Activated CD4-positive, alpha-beta T cell treated with anti-CD3 and anti-CD28 coated beads for 36 hours (primary cell): ENCODE measurements at regions of chr10 and their contacts with region 1.

Region 1: DNA sequence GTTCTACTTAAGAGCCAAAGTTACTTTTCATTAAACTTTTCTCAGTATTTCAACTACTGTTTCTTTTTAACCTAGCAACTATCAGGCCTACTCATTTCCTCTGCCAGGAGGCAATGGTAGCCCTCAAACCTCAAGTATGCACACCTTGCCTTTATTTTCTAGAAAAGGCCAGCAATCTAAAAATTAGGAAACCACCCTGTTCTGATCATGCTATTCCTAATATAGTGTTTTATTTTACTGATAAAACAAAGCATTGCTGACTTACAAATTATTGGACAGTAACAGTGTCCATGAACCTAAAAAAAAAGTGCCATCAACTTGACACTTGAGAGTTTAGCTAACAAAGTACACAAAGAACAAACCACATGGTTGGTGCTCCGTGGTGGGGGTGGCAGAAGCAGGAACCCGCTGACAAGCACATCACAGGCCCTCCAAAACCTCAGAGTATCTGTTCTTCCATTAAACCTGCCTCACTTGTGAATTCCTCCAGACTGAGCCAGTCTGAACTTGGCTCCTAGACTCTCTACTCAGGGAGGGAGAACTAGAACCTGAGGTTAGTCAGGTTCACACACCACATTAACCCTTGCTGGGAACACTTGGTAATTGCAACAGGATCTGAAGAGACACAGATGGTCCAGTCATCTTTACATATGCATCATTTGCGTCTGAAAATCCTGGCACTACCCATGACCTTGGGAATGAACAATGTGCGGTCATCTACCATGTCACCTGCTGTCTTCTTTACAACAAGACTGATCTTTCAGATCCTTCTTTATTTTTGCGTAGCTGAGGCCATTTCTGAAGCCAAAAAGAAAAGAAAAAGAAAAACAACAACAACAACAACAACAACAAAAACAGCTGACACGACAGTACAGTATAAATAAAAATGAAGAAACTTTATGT is 31.9 kb downstream of the PIP4K2A start:
- DNase-seq: peak; percentile 78
- ATAC-seq: peak; percentile 50
- H3K4me3 Mint-ChIP-seq: peak overlapping the region; percentile 70
- H3K27ac Mint-ChIP-seq: peak overlapping the region; percentile 97
- H3K4me1 Mint-ChIP-seq: peaks cover 88% of the 10 kb centered on the region
- H3K27me3 Mint-ChIP-seq: no peaks in the 10 kb centered on the region

Region 2: GRCh38 chr10:22325272-22326144 is 357.0 kb before region 1 on chr10:
- CTCF ChIA-PET with region 1: no interaction called
- POLR2A ChIA-PET with region 1: no interaction called
- intact Hi-C with region 1: loop called in 1 of 2 experiments (anchors 10 kb)
- DNase-seq: peak; percentile 83
- ATAC-seq: peak; percentile 45
- H3K4me3 Mint-ChIP-seq: peak overlapping the region; percentile 88
- H3K27ac Mint-ChIP-seq: peak overlapping the region; percentile 64
- H3K4me1 Mint-ChIP-seq: peaks cover 35% of the 10 kb centered on the region
- H3K27me3 Mint-ChIP-seq: peaks cover 23% of the 10 kb centered on the region

Region 3: DNA sequence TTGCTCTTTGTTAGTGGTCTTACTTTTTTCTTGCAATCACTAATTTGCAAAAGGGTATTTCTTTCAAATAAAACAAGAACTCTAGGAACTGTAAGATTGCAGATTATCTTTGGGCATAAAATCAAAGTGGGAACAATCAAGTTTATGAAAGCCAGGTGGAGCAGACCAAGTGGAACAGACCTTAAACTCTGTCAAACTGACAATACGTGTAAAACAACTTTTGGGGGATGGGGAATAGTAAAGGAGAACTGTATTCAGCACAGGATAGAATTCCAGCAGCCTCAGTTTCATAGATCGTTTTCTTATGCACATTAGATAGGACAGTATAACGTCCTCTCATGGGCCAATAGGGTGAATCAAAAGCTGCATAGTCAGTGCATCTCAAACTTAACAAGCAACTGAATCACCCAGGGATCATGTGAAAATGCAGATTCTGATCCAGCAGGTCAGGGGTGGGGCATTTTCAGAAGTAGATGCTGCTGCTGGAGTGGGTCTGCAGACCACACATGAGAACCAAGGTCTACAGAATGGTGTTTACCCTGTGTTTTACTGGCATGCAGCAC is 88.8 kb before region 1 on chr10:
- CTCF ChIA-PET with region 1: no interaction called
- POLR2A ChIA-PET with region 1: no interaction called
- intact Hi-C with region 1: no loop called
- DNase-seq: no peak
- ATAC-seq: no peak
- H3K4me3 Mint-ChIP-seq: no peak overlapping the region
- H3K27ac Mint-ChIP-seq: no peak overlapping the region
- H3K4me1 Mint-ChIP-seq: peaks cover 39% of the 10 kb centered on the region
- H3K27me3 Mint-ChIP-seq: no peaks in the 10 kb centered on the region

Region 4: DNA sequence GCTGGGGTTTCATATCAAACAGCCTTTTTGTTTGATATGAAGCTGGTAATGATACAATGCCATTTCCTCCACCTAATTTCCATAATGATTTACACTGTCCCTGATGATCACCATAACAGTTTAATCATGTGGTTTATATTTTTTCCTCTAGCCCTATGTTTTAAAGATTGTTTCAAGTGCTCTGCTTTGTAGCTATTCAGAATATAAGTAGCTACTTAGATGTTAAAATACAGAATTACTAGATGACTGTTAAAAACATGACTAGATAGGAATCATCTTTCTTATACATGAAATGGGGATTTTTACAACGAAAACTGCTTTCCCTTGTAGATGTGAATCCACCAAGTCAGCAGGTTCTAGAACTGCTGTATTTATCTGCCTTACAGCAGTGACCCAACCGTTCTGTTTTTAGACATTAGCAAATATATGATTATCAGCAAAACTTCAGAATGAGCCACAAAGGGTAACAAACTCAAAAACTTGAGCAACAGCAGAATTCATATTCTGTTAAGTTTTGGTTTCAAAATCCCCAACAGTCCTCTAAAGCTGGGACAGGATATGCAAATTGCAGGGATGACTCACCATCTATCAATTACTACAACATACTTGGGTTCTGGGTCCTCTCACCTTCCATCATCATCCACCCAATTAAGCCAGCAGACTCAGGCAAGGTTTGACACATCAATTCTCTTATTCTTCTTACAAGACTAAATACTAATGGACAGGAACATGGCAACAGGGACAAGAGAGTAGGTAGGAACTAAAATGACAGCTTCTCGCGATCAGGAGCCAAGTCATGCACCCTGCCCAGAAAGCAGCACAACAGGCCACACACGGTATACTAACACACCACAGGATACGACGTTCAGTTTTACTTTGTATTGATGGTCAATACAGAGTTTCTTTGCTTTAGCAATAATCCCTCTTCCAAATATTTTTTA is 52.0 kb before region 1 on chr10:
- CTCF ChIA-PET with region 1: interaction called, 12 read pairs
- POLR2A ChIA-PET with region 1: interaction called, 16 read pairs
- intact Hi-C with region 1: loop called (anchors 1 kb)
- DNase-seq: peak; percentile 57
- ATAC-seq: peak; percentile 79
- H3K4me3 Mint-ChIP-seq: peak overlapping the region; percentile 61
- H3K27ac Mint-ChIP-seq: peak overlapping the region; percentile 96
- H3K4me1 Mint-ChIP-seq: peaks cover 95% of the 10 kb centered on the region
- H3K27me3 Mint-ChIP-seq: no peaks in the 10 kb centered on the region

Region 5: DNA sequence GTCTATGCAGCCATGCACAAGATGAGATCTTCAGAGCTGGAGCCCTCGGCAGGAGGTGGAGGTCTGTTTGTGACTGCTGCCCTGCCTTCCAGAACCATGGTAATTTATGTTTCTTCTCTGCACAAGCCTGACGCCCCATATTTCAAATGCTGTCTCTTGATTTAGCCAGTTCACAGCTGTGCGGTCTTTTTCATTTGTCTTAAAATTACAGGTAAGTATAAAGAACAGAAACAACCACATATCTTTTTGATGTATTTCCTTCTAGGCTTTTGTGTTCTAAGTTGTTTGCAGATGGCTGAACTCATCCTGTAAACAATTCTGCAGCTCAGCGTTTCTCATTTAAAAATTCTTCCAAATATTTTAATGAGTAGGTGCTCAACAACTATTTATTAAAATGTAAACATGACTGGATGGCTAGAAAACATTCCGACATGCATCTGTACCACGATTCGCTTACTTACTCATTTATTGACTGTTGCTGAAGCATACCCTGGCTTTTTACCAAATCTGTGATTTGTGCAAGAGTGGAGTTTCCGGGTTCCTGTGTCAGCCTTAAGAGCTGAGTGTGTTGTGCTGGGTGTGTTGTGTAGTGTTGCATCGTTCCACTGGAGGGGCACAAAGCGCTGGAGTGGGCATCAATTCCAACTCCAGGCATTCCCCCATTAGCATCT is 27.0 kb before region 1 on chr10:
- CTCF ChIA-PET with region 1: interaction called, 14 read pairs
- POLR2A ChIA-PET with region 1: interaction called, 5 read pairs
- intact Hi-C with region 1: loop called (anchors 1 kb)
- DNase-seq: peak; percentile 62
- ATAC-seq: peak; percentile 57
- H3K4me3 Mint-ChIP-seq: peak overlapping the region; percentile 63
- H3K27ac Mint-ChIP-seq: peak overlapping the region; percentile 85
- H3K4me1 Mint-ChIP-seq: peaks cover 98% of the 10 kb centered on the region
- H3K27me3 Mint-ChIP-seq: no peaks in the 10 kb centered on the region

Region 6: DNA sequence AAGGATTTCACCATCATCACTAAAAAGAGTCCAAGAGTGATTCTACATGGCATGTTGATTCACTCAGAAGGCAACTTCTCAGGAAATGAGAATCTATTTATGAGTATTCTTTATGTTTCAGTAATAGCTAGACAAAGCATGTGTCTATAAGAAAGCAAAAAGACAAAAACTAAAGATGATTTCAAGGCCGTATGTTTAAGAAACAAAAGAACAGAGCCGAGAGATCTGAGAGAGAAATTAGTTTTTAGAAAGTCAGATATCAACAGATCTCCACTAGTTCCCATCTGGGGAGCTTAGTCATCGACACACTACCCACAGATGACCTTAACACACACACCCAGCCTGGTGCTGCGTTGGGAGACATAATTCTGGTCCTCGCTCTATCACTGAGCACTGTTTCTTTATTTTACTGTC is 10.9 kb after region 1 on chr10:
- CTCF ChIA-PET with region 1: interaction called, 6 read pairs
- POLR2A ChIA-PET with region 1: interaction called, 5 read pairs
- intact Hi-C with region 1: loop called (anchors 1 kb)
- DNase-seq: peak; percentile 51
- ATAC-seq: peak; percentile 87
- H3K4me3 Mint-ChIP-seq: peak overlapping the region; percentile 46
- H3K27ac Mint-ChIP-seq: peak overlapping the region; percentile 97
- H3K4me1 Mint-ChIP-seq: peaks cover 91% of the 10 kb centered on the region
- H3K27me3 Mint-ChIP-seq: no peaks in the 10 kb centered on the region

Region 7: DNA sequence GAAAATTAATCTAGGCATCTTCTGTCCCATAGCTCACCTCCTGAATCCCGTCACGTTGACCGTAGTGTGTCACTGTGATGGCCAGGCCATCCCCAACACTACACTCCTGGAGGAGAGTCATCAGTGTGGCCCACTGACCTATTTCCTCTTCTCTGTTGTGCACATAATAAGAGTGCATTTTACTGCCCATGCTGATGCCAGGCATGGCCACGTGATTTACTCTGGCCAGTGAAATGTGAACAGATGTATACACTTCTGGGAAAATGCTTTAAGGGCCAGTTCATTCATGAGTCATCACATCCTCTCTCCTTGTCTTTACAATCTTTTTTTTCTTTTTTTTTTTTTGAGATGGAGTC is 133.8 kb after region 1 on chr10:
- CTCF ChIA-PET with region 1: no interaction called
- POLR2A ChIA-PET with region 1: no interaction called
- intact Hi-C with region 1: no loop called
- DNase-seq: no peak
- ATAC-seq: peak; percentile 48
- H3K4me3 Mint-ChIP-seq: no peak overlapping the region
- H3K27ac Mint-ChIP-seq: no peak overlapping the region
- H3K4me1 Mint-ChIP-seq: peaks cover 13% of the 10 kb centered on the region
- H3K27me3 Mint-ChIP-seq: no peaks in the 10 kb centered on the region

Region 8: GRCh38 chr10:23095404-23095965 is 413.0 kb after region 1 on chr10 and contains the start of gene MSRB2:
- CTCF ChIA-PET with region 1: no interaction called
- POLR2A ChIA-PET with region 1: no interaction called
- intact Hi-C with region 1: loop called in 1 of 2 experiments (anchors 5 kb)
- DNase-seq: peak; percentile 84
- ATAC-seq: peak; percentile 58
- H3K4me3 Mint-ChIP-seq: peak within 1 kb of the TSS; percentile 95
- H3K27ac Mint-ChIP-seq: peak within 1 kb of the TSS; percentile 92
- H3K4me1 Mint-ChIP-seq: peaks cover 39% of the 10 kb centered on the region
- H3K27me3 Mint-ChIP-seq: no peaks in the 10 kb centered on the region
- total RNA-seq, gene MSRB2: 8.2 to 9.0 TPM